ENCODE measurements at regions of chr21 and their contacts with region 1.

Region 1: GRCh38 chr21:16794944-16795343 is 717.9 kb upstream of the CXADR start:
- DNase-seq: no peak
- ATAC-seq: no peak
- H3K4me3 ChIP-seq: no peak overlapping the region
- H3K4me1 ChIP-seq: no peaks in the 10 kb centered on the region
- CTCF ChIP-seq: no peak

Region 2: DNA sequence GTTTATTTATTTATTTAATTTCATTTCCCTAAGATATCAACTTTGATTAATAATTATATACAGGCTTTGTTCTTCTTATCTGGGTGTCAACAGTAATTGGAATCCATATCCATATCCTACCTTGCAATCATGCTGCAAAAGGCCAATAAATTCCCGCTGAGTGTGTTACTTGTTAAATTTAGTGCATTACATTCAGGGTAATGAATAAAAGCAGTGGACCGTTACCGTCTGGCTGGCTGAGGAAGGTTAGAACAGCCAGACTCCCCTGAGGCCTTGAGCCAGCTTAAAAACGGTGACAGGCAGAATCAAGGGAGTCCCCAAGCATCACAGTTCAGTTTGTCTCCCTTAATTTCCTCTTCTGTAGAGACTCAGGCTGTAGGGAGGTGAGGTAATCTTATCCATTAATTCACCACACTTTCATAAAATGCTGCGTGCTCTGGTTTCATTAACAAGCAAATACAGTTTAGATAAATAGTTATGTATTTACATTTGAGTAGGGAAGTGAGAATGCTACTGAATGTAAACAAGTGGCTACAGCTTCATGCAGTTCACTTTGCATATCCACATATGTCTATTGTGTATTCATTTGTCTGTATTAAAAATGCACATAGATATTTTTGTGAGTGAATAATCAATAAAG is 170.3 kb before region 1 on chr21:
- intact Hi-C with region 1: no loop called
- DNase-seq: no peak
- ATAC-seq: no peak
- H3K4me3 ChIP-seq: no peak overlapping the region
- H3K4me1 ChIP-seq: no peaks in the 10 kb centered on the region
- CTCF ChIP-seq: no peak

Region 3: DNA sequence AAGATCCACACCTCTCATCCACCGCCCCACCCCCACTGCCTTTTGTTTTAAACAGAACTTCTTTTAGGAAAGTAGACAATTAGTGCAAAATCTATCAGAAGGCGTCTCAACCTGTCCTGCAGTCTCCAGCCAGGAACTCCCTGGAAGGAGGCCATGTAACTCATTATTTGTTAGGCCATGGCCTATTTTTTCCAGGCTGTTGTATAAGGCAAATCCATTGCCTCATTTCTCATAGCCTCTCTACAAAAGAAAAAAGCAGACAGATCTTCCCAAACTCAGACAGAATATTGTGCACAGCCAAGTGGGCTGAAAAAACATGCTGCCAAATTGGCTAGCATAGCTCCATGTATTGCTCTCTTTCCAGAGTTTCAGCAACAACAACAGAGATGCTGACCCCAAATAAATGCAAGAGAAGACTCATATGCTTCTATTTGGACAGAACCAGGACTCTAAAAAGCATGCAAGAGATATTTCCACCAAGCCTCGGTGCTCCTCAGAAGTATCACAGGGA is 52.8 kb before region 1 on chr21:
- intact Hi-C with region 1: loop called in 1 of 2 experiments (anchors 5 kb)
- DNase-seq: peak in 1 of 3 donors; percentile 1
- ATAC-seq: no peak
- H3K4me3 ChIP-seq: no peak overlapping the region
- H3K4me1 ChIP-seq: no peaks in the 10 kb centered on the region
- CTCF ChIP-seq: no peak

Region 4: GRCh38 chr21:17003763-17004373 is 208.9 kb after region 1 on chr21:
- intact Hi-C with region 1: no loop called
- DNase-seq: no peak
- ATAC-seq: no peak
- H3K4me3 ChIP-seq: no peak overlapping the region
- H3K4me1 ChIP-seq: no peaks in the 10 kb centered on the region
- CTCF ChIP-seq: no peak